ENCODE measurements at regions of chr5 and their contacts with region 1.

Region 1: DNA sequence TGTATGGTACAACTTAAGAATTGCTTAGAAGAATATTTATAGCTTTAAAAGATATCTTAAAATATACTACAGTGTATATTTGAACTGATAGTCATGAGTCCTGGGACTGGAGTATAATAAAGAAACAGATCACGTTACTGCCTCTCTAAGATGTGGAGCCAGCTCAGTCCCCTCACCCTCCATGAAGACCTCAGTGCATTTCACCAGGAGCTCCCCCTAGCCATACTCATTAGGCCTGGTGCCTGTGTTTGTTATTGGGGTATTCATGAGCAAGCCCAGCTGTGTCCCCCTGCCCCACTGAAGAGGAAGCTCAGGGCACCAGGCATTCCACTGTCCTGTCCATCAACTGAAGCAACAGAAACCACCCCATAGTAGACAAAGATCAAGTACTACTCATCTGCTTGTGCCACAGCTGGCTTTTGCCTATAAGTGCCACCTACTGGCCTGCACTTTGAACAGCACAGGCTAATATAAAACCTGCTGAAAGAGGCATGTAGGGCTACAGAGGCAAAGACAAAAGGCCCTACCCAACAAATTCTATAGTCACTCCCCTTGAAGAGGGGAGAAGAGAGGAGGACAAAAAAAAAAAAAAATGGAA is 850.2 kb upstream of the NUDT12 start:
- DNase-seq: peak; percentile 17
- ATAC-seq: peak; percentile 78
- H3K4me3 ChIP-seq: no peak overlapping the region
- H3K27ac ChIP-seq: no peak overlapping the region
- H3K4me1 ChIP-seq: no peaks in the 10 kb centered on the region
- H3K27me3 ChIP-seq: no peaks in the 10 kb centered on the region
- CTCF ChIP-seq: peak; percentile 28
- POLR2A ChIP-seq: no peak
- RAD21 ChIP-seq: no peak

Region 2: GRCh38 chr5:103582364-103582763 is 830.4 kb before region 1 on chr5:
- CTCF ChIA-PET with region 1: no interaction called
- POLR2A ChIA-PET with region 1: no interaction called
- dilution Hi-C with region 1: no loop called
- in situ Hi-C with region 1: no loop called
- intact Hi-C with region 1: loop called (anchors 5 kb)
- DNase-seq: peak; percentile 50
- ATAC-seq: no peak
- H3K4me3 ChIP-seq: no peak overlapping the region
- H3K27ac ChIP-seq: no peak overlapping the region
- H3K4me1 ChIP-seq: no peaks in the 10 kb centered on the region
- H3K27me3 ChIP-seq: no peaks in the 10 kb centered on the region
- CTCF ChIP-seq: peak; percentile 56
- POLR2A ChIP-seq: no peak
- RAD21 ChIP-seq: peak; percentile 59

Region 3: DNA sequence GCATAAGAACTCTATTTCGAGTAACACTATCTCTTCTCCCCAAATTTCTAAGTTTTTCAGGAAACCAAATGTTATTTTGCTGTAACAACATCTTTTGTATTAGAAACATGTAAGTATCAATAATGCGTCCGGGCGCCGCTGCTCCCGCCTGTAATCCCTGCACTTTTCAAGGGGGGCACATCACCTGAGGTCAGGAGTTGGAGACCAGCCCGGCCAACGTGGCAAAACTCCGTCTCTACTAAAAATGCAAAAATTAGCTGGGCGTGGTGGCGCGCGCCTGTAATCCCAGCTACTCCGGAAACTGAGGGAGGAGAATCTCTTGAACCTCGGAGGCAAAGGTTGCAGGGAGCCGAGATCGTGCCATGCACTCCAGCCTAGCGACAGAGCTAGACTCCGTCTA is 31.0 kb after region 1 on chr5:
- CTCF ChIA-PET with region 1: no interaction called
- POLR2A ChIA-PET with region 1: no interaction called
- dilution Hi-C with region 1: no loop called
- in situ Hi-C with region 1: no loop called
- intact Hi-C with region 1: no loop called
- DNase-seq: no peak
- ATAC-seq: no peak
- H3K4me3 ChIP-seq: no peak overlapping the region
- H3K27ac ChIP-seq: no peak overlapping the region
- H3K4me1 ChIP-seq: no peaks in the 10 kb centered on the region
- H3K27me3 ChIP-seq: no peaks in the 10 kb centered on the region
- CTCF ChIP-seq: no peak
- POLR2A ChIP-seq: no peak
- RAD21 ChIP-seq: no peak

Measured in IMR-90 (cell line).